ENCODE measurements at regions of chr1 and their contacts with region 1.

Region 1: GRCh38 chr1:220294846-220295301 is 22.6 kb upstream of the RAB3GAP2 start:
- DNase-seq: peak; percentile 33
- ATAC-seq: no peak
- H3K4me3 ChIP-seq: no peak overlapping the region
- H3K27ac ChIP-seq: no peak overlapping the region
- H3K4me1 ChIP-seq: no peaks in the 10 kb centered on the region
- H3K27me3 ChIP-seq: peaks cover 45% of the 10 kb centered on the region
- CTCF ChIP-seq: no peak

Region 2: GRCh38 chr1:220255204-220255603 is 39.7 kb before region 1 on chr1:
- CTCF ChIA-PET with region 1: no interaction called
- POLR2A ChIA-PET with region 1: no interaction called
- intact Hi-C with region 1: no loop called
- DNase-seq: no peak
- ATAC-seq: no peak
- H3K4me3 ChIP-seq: no peak overlapping the region
- H3K27ac ChIP-seq: no peak overlapping the region
- H3K4me1 ChIP-seq: no peaks in the 10 kb centered on the region
- H3K27me3 ChIP-seq: no peaks in the 10 kb centered on the region
- CTCF ChIP-seq: no peak

Region 3: GRCh38 chr1:220344745-220345144 is 49.9 kb after region 1 on chr1:
- CTCF ChIA-PET with region 1: no interaction called
- POLR2A ChIA-PET with region 1: no interaction called
- intact Hi-C with region 1: no loop called
- DNase-seq: no peak
- ATAC-seq: no peak
- H3K4me3 ChIP-seq: no peak overlapping the region
- H3K27ac ChIP-seq: no peak overlapping the region
- H3K4me1 ChIP-seq: 0 out of 2 replicates have a peak, but pooled peaks cover 7% of the 10 kb centered on the region
- H3K27me3 ChIP-seq: peaks cover 24% of the 10 kb centered on the region
- CTCF ChIP-seq: no peak

Region 4: GRCh38 chr1:220527908-220528678 is 233.2 kb after region 1 on chr1 and contains the start of gene MARK1:
- CTCF ChIA-PET with region 1: no interaction called
- POLR2A ChIA-PET with region 1: no interaction called
- intact Hi-C with region 1: loop called (anchors 5 kb)
- DNase-seq: peak; percentile 47
- ATAC-seq: peak; percentile 73
- H3K4me3 ChIP-seq: peak within 1 kb of the TSS; percentile 69
- H3K27ac ChIP-seq: no peak within 1 kb of the TSS
- H3K4me1 ChIP-seq: peaks cover 13% of the 10 kb centered on the region; the same call in 1 of the 2 replicates
- H3K27me3 ChIP-seq: peaks cover 93% of the 10 kb centered on the region
- CTCF ChIP-seq: no peak
- total RNA-seq, gene MARK1: 0.40 and 1.5 TPM in 2 replicates

Region 5: DNA sequence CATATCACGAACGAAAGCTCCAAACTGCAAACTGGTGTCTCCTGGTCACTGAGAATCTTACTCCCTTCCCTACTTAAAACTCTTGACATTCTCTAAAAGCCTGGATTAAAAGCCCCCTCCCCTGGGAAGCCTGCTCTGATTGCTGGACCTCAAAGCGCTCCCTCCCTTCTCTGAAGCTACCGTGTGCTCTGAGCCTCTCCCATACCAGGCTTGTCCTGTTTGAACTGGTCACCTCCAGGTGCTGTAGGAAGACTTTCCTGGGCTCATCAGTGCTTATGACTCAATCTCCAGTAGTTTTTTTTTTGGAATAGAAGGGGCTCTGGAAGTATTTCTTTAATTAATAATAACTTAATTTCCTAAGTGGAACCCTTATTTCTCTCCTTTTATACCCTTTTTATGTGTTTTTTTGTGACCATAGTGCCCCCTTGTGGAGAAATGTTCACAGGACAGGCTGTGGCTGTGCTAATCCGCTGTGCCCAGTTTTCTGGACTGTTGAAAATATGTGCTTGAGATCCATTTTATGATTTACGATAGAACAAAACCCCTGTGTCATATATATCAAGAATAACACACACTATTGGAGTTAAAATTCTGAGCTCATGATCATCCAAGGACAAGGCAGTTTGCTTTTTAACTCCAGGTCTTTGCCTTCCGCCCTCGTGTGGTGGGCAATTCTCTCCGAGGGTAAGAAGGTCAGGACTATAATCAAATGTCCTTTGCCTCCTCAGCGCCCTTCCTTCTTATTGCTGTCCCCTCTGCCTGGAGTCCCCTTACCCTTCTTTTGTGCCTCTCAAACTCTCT is 508.7 kb after region 1 on chr1:
- CTCF ChIA-PET with region 1: no interaction called
- POLR2A ChIA-PET with region 1: no interaction called
- intact Hi-C with region 1: loop called (anchors 5 kb)
- DNase-seq: peak; percentile 64
- ATAC-seq: peak; percentile 77
- H3K4me3 ChIP-seq: no peak overlapping the region
- H3K27ac ChIP-seq: no peak overlapping the region
- H3K4me1 ChIP-seq: no peaks in the 10 kb centered on the region
- H3K27me3 ChIP-seq: no peaks in the 10 kb centered on the region
- CTCF ChIP-seq: peak; percentile 98

Measured in PC-3 (cell line).